ENCODE measurements at regions of chr12 and their contacts with region 1.

Region 1: GRCh38 chr12:52903285-52903854 is 1.5 kb downstream of the KRT8 start:
- DNase-seq: peak; percentile 25 to 72 (median 60)
- ATAC-seq: peak; percentile 86
- H3K4me3 ChIP-seq: peak overlapping the region; percentile 56
- H3K4me3 Mint-ChIP-seq: peak overlapping the region in 9 of 10 donors; percentile 36 to 85 (median 68)
- H3K27ac ChIP-seq: peak overlapping the region; percentile 39
- H3K27ac Mint-ChIP-seq: peak overlapping the region in 6 of 9 donors; percentile 11 to 49 (median 36)
- H3K4me1 ChIP-seq: peaks cover 0 to 3% of the 10 kb centered on the region in 2 donors
- H3K4me1 Mint-ChIP-seq: peaks cover 3 to 16% (median 5%) of the 10 kb centered on the region in 7 donors
- H3K27me3 ChIP-seq: no peaks in the 10 kb centered on the region
- H3K27me3 Mint-ChIP-seq: peaks cover 0 to 13% (median 0%) of the 10 kb centered on the region in 5 donors

Region 2: DNA sequence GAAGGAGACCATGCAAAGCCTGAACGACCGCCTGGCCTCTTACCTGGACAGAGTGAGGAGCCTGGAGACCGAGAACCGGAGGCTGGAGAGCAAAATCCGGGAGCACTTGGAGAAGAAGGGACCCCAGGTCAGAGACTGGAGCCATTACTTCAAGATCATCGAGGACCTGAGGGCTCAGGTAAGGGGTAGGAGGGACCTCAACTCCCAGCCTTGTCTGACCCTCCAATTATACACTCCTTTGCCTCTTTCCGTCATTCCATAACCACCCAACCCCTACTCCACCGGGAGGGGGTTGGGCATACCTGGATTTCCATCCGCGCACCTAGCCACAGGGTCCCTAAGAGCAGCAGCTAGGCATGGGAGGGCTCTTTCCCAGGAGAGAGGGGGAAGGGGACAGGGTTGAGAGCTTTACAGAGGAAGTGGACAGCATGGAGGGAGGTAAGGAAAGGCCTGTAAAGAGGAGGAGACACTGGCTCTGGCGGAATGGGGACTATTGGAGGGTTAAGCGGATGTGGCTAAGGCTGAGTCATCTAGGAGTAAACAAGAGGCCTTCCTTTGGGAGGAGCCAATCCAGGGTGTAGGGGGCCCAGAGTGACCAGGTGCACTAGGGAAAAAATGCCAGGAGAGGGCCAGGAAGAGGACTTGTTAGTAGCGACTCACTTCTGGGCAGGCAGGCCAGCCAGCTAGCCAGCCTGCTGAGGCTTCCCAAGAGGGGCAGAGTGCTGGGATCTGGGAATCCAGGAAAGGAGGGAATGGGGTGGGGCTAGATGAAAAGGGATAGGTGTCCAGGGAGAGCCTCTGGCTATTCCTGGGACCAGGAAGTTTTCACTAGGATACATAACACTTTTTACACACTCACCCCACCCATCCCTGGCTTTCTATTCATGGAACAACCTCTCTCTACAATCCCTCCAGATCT is 46.3 kb after region 1 on chr12:
- CTCF ChIA-PET with region 1: no interaction called
- POLR2A ChIA-PET with region 1: no interaction called
- intact Hi-C with region 1: loop called in 1 of 2 experiments (anchors 5 kb)
- DNase-seq: no peak
- ATAC-seq: no peak
- H3K4me3 ChIP-seq: peak overlapping the region; percentile 56
- H3K4me3 Mint-ChIP-seq: peak overlapping the region; percentile 39 to 90 (median 82)
- H3K27ac ChIP-seq: peak overlapping the region; percentile 67
- H3K27ac Mint-ChIP-seq: peak overlapping the region in 7 of 9 donors; percentile 69 to 92 (median 76)
- H3K4me1 ChIP-seq: peaks cover 0 to 5% of the 10 kb centered on the region in 2 donors
- H3K4me1 Mint-ChIP-seq: peaks cover 2 to 18% (median 6%) of the 10 kb centered on the region in 7 donors
- H3K27me3 ChIP-seq: no peaks in the 10 kb centered on the region
- H3K27me3 Mint-ChIP-seq: peaks cover 0 to 13% (median 0%) of the 10 kb centered on the region in 5 donors